ENCODE measurements at regions of chr2 and their contacts with region 1.

Region 1: GRCh38 chr2:222993920-222994650 is 57.9 kb upstream of the KCNE4 start:
- DNase-seq: peak; percentile 90 to 96
- H3K4me3 ChIP-seq: no peak overlapping the region
- H3K27ac ChIP-seq: peak overlapping the region; percentile 79
- H3K4me1 ChIP-seq: peaks cover 9% of the 10 kb centered on the region
- H3K27me3 ChIP-seq: no peaks in the 10 kb centered on the region
- CTCF ChIP-seq: no peak
- POLR2A ChIP-seq: no peak

Region 2: DNA sequence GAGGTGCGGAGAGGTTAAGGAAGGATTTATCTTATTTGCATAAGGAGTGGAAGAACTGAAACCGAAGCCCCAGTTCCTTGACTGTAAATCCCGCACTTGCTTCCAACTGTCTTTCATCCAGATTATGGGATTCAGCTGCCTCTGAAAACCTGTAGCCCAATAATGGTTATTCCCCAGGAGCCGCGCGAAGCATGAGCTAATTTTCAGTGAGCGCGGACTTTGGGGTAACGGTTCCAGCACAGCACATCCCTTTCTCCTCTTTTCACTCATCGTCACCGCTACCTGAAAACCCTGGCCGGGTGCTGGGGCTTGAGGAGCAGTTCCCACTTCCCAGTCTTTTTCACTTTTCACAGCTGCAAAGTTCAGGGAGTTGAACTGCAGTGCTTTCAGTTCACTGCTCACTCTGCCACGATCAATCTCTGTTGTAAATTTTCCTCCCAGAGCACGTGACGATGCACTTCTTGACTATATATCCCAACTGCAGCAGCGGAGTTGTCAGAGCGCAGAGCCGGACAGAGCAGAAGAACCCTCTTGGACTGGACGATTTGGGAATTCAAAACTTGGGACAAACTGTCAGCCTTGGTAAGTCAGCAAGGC is 57.7 kb after region 1 on chr2 and contains the start of gene KCNE4:
- intact Hi-C with region 1: loop called (anchors 5 kb)
- DNase-seq: no peak
- H3K4me3 ChIP-seq: peak within 1 kb of the TSS; percentile 45 to 46
- H3K27ac ChIP-seq: peak within 1 kb of the TSS; percentile 87
- H3K4me1 ChIP-seq: peaks cover 34% of the 10 kb centered on the region
- H3K27me3 ChIP-seq: no peaks in the 10 kb centered on the region
- CTCF ChIP-seq: no peak
- POLR2A ChIP-seq: peak in 1 of 2 donors; percentile 51
- total RNA-seq, gene KCNE4: 4.9 TPM